ENCODE measurements at regions of chr12 and their contacts with region 1.

Region 1: DNA sequence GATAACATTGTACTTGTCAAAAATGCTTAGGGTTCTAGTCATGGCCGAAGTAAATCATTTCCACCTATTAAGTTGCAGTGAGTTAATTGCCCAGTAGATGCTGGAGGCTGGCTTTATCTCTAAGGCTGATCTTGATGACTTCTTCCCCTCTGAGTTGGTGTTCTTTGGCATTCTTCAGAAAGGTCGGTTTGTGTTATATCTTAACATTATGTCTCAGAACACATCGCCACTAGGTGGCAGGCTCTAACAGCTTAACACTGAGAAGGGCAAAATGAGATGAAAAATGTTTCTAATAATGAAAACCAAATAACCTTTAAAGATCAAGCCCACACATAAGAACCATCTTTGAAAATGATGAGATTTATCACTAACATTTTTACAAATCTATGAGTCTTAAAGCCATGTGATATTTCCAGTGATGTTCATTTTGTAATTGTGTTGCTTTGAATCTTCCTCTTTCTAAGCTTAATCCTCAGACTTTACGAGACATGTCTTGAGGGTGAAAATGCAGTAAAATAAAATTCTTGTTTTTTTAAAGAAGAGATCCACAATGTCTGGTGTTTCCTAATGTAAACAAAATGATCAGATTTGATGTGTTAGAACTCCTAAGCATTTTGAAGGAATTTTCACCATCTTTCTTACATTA is 28.6 kb downstream of the SUDS3 start:
- DNase-seq: peak; percentile 48
- H3K4me3 ChIP-seq: no peak overlapping the region
- H3K27ac ChIP-seq: no peak overlapping the region
- H3K4me1 ChIP-seq: no peaks in the 10 kb centered on the region
- H3K27me3 ChIP-seq: no peaks in the 10 kb centered on the region
- CTCF ChIP-seq: peak; percentile 66 to 70 (median 69)
- EP300 ChIP-seq: no peak
- POLR2A ChIP-seq: no peak

Region 2: DNA sequence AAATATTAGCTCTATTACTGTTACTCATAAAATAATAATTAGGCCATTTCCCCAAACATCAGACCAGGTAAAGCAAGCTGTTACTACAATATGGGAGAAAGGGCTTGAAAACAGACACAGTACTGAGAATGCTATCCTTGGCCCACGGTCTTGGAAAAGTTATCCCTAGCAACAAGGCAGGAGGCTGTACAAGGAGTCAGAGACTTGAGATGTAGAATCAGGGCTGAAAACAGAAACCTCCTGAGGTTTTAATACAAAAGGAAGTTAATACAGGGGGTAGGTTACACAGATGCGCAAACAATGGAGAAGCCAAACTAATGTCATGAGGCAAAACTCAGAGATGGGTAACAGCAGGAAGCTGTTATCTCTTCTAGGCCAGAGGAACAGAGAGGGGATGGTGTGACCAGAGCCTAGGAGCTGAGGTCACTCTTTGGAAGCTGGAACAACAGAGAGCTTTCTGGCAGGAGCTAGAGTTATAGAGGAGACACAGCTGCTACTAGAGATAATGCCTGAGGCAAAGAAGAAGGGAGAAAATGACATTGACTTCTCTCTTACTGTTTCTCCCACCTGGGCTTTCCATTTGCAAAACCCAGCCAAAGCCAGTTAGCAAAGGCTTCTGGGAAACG is 220.2 kb after region 1 on chr12:
- in situ Hi-C with region 1: no loop called
- intact Hi-C with region 1: loop called (anchors 10 kb)
- DNase-seq: no peak
- H3K4me3 ChIP-seq: no peak overlapping the region
- H3K27ac ChIP-seq: no peak overlapping the region
- H3K4me1 ChIP-seq: no peaks in the 10 kb centered on the region
- H3K27me3 ChIP-seq: no peaks in the 10 kb centered on the region
- CTCF ChIP-seq: no peak
- EP300 ChIP-seq: no peak
- POLR2A ChIP-seq: no peak

Region 3: GRCh38 chr12:118727196-118727978 is 322.4 kb after region 1 on chr12:
- in situ Hi-C with region 1: no loop called
- intact Hi-C with region 1: no loop called
- DNase-seq: no peak
- H3K4me3 ChIP-seq: no peak overlapping the region
- H3K27ac ChIP-seq: no peak overlapping the region
- H3K4me1 ChIP-seq: no peaks in the 10 kb centered on the region
- H3K27me3 ChIP-seq: no peaks in the 10 kb centered on the region
- CTCF ChIP-seq: no peak
- EP300 ChIP-seq: no peak
- POLR2A ChIP-seq: no peak

Region 4: GRCh38 chr12:118850244-118850825 is 445.3 kb after region 1 on chr12:
- in situ Hi-C with region 1: no loop called
- intact Hi-C with region 1: loop called (anchors 10 kb)
- DNase-seq: peak; percentile 10
- H3K4me3 ChIP-seq: no peak overlapping the region
- H3K27ac ChIP-seq: no peak overlapping the region
- H3K4me1 ChIP-seq: no peaks in the 10 kb centered on the region
- H3K27me3 ChIP-seq: no peaks in the 10 kb centered on the region
- CTCF ChIP-seq: peak in 4 of 5 experiments; percentile 11 to 45 (median 36)
- EP300 ChIP-seq: no peak
- POLR2A ChIP-seq: no peak

Region 5: GRCh38 chr12:119036878-119037825 is 632.2 kb after region 1 on chr12:
- in situ Hi-C with region 1: loop called in 3 of 4 experiments (anchors 25 kb)
- intact Hi-C with region 1: loop called (anchors 5 kb)
- DNase-seq: peak; percentile 8
- H3K4me3 ChIP-seq: no peak overlapping the region
- H3K27ac ChIP-seq: no peak overlapping the region
- H3K4me1 ChIP-seq: no peaks in the 10 kb centered on the region
- H3K27me3 ChIP-seq: no peaks in the 10 kb centered on the region
- CTCF ChIP-seq: peak; percentile 34 to 49 (median 44)
- EP300 ChIP-seq: no peak
- POLR2A ChIP-seq: no peak